ENCODE measurements at regions of chr9 and their contacts with region 1.

Region 1: DNA sequence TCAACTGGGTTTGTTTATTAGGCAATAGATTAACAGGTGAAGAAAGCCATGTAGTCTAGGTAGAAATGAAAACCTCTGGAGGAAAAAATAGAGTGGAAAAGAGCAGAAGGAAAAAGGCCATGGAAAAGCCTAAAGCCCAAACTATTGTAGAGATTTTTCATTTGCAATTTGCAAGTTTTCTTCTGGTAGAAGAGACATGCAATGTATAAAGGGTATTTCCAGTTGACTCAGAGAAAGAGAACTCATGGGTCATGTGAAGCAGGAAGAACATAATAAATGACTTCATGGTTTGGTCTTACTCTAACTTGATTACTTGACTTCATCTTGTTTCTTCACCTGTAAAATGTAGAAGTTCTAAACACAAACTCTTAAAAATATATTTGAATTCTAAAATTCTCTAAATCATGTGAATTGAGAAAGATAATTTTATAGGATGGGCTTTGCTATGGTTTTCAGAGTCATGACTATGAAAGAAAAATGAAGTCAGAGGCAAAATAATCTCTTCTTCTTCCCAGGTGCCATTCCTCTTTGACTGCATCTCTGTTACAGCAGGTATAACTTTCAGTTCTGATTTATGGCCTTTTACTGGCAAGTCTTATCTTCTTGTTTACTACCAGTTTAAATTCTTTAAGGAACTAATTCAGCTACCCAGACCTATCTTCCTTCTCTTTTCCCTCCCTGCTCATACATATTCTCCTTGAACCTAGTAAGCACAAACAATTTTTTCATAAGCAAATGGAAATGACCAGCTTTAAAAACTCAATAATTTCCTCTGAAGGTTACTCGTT is 47.7 kb upstream of the TMC1 start:
- DNase-seq: no peak
- H3K4me3 Mint-ChIP-seq: peak overlapping the region; percentile 60
- H3K27ac Mint-ChIP-seq: peak overlapping the region; percentile 90
- H3K4me1 Mint-ChIP-seq: peaks cover 64% of the 10 kb centered on the region
- H3K27me3 Mint-ChIP-seq: no peaks in the 10 kb centered on the region

Region 2: GRCh38 chr9:71858812-71859211 is 614.9 kb before region 1 on chr9:
- intact Hi-C with region 1: loop called (anchors 10 kb)
- DNase-seq: peak; percentile 3
- H3K4me3 Mint-ChIP-seq: peak overlapping the region; percentile 0
- H3K27ac Mint-ChIP-seq: peak overlapping the region; percentile 51
- H3K4me1 Mint-ChIP-seq: peaks cover 25% of the 10 kb centered on the region
- H3K27me3 Mint-ChIP-seq: no peaks in the 10 kb centered on the region

Region 3: GRCh38 chr9:72443855-72444254 is 29.8 kb before region 1 on chr9:
- intact Hi-C with region 1: loop called (anchors 1 kb)
- DNase-seq: peak; percentile 8
- H3K4me3 Mint-ChIP-seq: peak overlapping the region; percentile 20
- H3K27ac Mint-ChIP-seq: peak overlapping the region; percentile 85
- H3K4me1 Mint-ChIP-seq: peaks cover 43% of the 10 kb centered on the region
- H3K27me3 Mint-ChIP-seq: no peaks in the 10 kb centered on the region

Region 4: DNA sequence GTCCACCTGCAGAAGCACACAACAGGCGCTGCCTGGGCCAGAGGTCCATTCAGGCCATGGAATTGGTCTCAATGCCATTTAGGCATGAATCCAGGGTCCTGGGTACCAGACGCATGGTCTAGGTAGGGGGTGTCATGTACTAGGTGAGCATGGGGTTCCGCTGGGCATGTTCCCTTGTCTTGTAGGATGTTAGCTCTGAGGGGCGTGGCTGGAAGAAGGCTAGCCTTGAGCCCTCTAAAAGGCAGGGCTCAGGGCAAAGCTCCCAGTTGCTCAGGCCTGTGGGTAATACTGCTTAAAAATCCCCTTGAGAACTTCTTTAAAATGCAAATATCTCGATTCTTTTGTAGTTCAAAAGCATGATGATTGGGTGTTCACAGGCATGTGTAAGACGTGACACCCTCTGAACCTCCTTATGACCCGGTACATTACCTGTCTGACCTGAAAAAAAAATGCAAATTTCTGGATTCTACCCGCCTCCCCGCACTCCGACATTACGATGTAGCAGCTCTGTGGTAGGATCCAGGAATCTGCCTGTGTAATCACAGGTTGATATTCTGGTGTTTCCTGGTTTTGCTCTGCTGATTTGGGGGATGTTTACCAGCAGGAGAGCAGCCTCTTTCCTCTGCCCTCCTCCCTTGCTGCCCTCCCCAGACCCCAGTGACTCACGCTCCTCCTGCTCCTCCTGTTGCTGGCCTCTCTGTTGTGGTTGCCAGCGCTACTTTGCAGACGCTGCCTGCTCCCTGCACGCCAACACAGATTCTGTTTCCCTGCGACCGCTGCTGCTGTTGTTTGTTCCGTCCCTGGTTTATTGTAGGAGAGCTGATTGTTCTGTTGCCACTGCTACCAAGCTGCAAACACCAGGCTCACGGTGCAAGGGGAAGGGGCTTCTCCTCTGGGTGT is 53.5 kb after region 1 on chr9:
- intact Hi-C with region 1: loop called (anchors 1 kb)
- DNase-seq: peak; percentile 75
- H3K4me3 Mint-ChIP-seq: peak overlapping the region; percentile 69
- H3K27ac Mint-ChIP-seq: peak overlapping the region; percentile 95
- H3K4me1 Mint-ChIP-seq: peaks cover 66% of the 10 kb centered on the region
- H3K27me3 Mint-ChIP-seq: no peaks in the 10 kb centered on the region

Region 5: DNA sequence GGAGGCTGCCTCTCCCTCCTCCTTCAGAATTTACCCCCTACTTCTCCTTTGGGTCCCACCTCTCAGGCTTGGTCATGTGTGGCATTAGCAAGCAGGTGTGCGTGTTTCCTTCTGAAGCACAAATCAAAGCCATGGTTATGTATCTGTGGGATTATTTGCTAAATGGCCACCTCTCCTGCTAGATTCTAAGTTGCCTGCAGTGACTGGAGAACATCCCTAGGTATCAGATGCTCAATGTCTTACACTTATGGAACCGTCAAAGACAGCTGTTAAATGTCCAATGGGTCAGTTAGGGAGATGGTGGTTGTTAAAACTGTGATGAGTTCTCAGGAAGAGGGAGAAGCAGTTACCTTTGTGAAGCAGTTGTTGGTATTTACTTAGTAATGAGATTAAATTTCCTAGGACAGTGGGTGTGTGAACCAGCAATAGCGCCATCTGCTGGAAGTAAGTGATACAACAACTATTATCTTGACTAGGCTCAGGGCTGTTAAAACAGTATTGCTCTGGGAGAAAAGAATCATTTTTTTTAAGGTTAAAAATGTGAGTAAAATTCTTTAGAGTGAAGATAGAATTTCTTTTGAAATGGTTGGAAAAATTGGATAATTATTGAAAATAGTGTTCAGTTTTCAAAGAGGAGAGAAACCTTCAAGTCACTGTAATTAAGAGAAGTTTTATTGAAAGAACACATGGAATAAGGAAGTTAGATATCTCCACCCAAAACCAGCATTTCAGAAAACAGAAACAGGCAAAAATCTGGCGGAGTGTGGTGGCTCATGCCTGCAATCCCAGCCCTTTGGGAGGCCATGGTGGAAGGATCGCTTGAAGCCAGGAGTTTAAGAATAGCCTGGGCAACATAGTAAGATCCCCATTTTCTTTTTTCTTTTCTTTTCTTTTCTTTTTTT is 119.1 kb after region 1 on chr9:
- intact Hi-C with region 1: loop called (anchors 2 kb)
- DNase-seq: peak; percentile 13
- H3K4me3 Mint-ChIP-seq: no peak overlapping the region
- H3K27ac Mint-ChIP-seq: no peak overlapping the region
- H3K4me1 Mint-ChIP-seq: peaks cover 46% of the 10 kb centered on the region
- H3K27me3 Mint-ChIP-seq: peaks cover 3% of the 10 kb centered on the region